A673 (cell line): ENCODE measurements at regions of chrX and their contacts with region 1.

Region 1: GRCh38 chrX:41695426-41695825 is 6.7 kb downstream of the GPR34 start:
- DNase-seq: no peak
- H3K4me3 ChIP-seq: no peak overlapping the region
- H3K27ac ChIP-seq: no peak overlapping the region
- H3K4me1 ChIP-seq: peaks cover 5% of the 10 kb centered on the region
- H3K27me3 ChIP-seq: no peaks in the 10 kb centered on the region
- CTCF ChIP-seq: no peak

Region 2: DNA sequence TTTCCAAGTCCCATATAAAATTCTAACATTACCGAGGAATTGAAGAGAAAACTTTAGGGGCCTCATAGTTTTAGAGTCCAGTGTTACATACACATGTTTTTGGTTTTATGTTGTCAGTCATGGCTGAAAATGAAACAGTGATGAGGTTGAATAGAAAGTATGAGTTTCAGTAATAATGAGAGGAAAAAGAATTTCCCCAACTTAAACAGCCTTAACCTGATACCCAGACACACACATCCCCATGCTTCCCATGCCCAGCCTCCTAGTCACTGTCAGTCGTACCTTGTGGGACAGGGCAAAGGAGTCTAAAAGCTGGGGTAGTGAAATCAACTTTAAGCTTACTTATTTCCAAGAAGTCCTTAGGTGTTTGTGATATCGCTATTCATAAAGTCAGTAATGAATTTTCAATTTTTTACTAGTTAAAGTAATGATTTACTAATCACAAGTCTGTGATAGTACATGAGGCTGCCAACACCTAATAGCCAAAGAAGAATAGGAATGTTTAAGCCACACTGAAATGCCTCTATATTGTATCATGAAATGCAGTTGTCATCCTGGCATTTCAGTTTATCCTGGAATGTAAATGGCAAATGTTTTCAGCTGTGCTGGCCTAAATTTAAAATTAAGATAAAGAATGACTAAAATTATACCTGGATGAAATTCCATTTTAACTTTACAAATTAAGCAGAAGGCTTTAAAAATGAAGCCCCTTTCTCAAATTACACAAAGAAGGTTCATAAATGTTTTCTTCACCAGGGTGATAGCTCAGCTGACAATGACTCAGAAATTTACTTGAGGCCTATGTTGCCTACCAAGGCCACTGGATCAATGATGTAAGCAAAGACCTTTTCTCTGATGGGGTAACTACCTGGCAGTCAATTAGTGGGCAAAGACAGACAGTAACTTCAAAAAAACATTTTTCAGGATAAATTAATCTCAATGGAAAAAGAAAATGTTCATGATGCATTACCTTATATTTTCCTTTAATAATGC is 30.8 kb before region 1 on chrX:
- CTCF ChIA-PET with region 1: interaction called, 10 read pairs
- POLR2A ChIA-PET with region 1: no interaction called
- intact Hi-C with region 1: no loop called
- DNase-seq: no peak
- H3K4me3 ChIP-seq: no peak overlapping the region
- H3K27ac ChIP-seq: no peak overlapping the region
- H3K4me1 ChIP-seq: peaks cover 3% of the 10 kb centered on the region
- H3K27me3 ChIP-seq: no peaks in the 10 kb centered on the region
- CTCF ChIP-seq: no peak

Region 3: DNA sequence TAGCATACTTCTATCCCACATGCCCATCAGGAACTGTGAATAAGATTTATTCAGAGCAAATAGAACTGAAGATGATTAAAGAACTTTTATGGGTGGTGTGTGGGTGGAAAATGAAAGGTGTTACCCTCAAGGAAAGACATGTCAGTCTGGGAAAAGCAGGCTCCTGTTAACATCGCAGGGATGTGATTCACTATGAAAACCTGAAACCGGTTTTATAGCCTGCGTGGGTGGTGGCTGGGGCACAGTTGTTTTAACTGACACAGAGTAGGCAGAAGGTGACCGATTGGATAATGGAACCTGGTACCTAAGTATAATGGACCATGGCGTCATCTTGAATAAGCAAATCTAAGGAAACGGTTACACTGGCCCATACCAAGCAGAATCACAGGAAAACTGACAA is 289.2 kb after region 1 on chrX:
- CTCF ChIA-PET with region 1: no interaction called
- POLR2A ChIA-PET with region 1: no interaction called
- intact Hi-C with region 1: no loop called
- DNase-seq: no peak
- H3K4me3 ChIP-seq: no peak overlapping the region
- H3K27ac ChIP-seq: no peak overlapping the region
- H3K4me1 ChIP-seq: no peaks in the 10 kb centered on the region
- H3K27me3 ChIP-seq: no peaks in the 10 kb centered on the region
- CTCF ChIP-seq: no peak